ENCODE measurements at regions of chr3 and their contacts with region 1.

Region 1: DNA sequence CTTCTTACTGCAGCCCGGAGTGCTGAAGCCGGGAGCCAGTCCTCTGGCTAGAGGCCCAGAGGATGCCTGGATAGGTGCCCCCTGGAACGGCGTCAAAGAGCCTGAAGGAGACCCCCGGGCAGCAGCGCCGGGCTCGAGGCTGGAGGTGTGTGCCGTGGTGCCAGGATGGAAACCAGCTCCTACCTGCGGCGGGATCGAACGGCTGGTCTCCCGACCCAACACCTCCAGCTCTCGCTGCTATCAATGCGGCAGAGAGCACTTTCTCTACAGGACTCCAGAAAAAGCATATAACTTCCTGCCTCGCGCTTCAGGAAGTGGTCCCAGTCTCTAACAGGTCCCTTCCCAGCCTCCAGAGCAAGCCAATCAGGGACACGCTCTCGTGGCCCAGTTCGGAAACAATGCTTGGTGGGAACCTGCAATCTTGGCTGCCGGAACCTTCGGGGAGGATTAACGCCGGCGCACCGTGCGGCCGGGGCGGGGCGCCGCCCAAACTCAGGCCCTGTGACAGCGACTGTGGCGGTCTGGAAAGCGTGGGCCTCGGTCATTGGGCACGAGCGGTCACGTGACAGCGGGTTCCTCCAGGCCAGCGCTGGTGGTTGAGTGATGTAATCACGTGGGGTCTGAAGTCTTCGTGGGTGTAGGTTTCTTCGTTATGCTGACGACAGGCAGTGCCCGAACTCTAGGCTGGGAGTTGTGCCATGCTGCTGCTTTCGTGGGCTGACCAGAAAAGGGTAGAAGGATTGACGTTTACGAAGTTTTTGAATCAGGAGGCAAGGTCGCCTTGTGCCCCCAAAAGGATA is at the start of gene SLC33A1:
- DNase-seq: peak; percentile 99
- H3K4me3 Mint-ChIP-seq: peak within 1 kb of the TSS; percentile 97
- H3K27ac Mint-ChIP-seq: peak within 1 kb of the TSS; percentile 100
- H3K4me1 Mint-ChIP-seq: peaks cover 37% of the 10 kb centered on the region
- H3K27me3 Mint-ChIP-seq: no peaks in the 10 kb centered on the region
- total RNA-seq, gene SLC33A1: 31.6 to 34.2 TPM

Region 2: DNA sequence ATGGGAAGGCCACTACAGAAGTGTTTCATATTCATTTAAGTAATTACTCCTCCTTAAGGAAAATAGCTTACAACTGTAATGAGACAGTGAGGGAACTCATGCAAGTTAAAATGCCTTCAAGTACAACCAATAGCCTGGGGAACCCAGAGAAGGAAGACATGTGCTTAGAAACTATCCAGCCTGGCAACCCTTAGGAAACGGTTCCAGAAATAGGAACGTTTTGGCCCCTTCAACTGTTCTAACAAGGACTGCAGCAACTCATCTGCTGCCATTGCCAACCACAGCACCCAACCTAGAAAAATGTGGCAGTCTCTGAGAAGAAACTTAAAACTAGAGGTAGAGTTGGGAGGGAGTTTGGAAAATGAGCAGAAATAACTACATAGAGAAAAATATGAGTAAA is 413.3 kb before region 1 on chr3:
- CTCF ChIA-PET with region 1: no interaction called
- POLR2A ChIA-PET with region 1: no interaction called
- DNase-seq: no peak
- H3K4me3 Mint-ChIP-seq: no peak overlapping the region
- H3K27ac Mint-ChIP-seq: no peak overlapping the region
- H3K4me1 Mint-ChIP-seq: no peaks in the 10 kb centered on the region
- H3K27me3 Mint-ChIP-seq: no peaks in the 10 kb centered on the region

Region 3: GRCh38 chr3:155835341-155836071 is 18.8 kb before region 1 on chr3:
- CTCF ChIA-PET with region 1: no interaction called
- POLR2A ChIA-PET with region 1: interaction called, 10 read pairs
- DNase-seq: no peak
- H3K4me3 Mint-ChIP-seq: no peak overlapping the region
- H3K27ac Mint-ChIP-seq: no peak overlapping the region
- H3K4me1 Mint-ChIP-seq: peaks cover 8% of the 10 kb centered on the region
- H3K27me3 Mint-ChIP-seq: no peaks in the 10 kb centered on the region

Region 4: GRCh38 chr3:155870133-155870944 is 16.0 kb after region 1 on chr3 and contains the start of gene GMPS:
- CTCF ChIA-PET with region 1: interaction called, 18 read pairs
- POLR2A ChIA-PET with region 1: interaction called, 127 read pairs
- DNase-seq: peak; percentile 96
- H3K4me3 Mint-ChIP-seq: peak within 1 kb of the TSS; percentile 97
- H3K27ac Mint-ChIP-seq: peak within 1 kb of the TSS; percentile 91
- H3K4me1 Mint-ChIP-seq: peaks cover 31% of the 10 kb centered on the region
- H3K27me3 Mint-ChIP-seq: no peaks in the 10 kb centered on the region
- total RNA-seq, gene GMPS: 106 to 111 TPM